Natural killer cell (primary cell): ENCODE measurements at regions of chr1 and their contacts with region 1.

Region 1: GRCh38 chr1:156096640-156097391 is 14.6 kb upstream of the MEX3A start:
- DNase-seq: peak; percentile 82 to 97
- ATAC-seq: peak; percentile 80 to 88 (median 85)
- H3K4me3 ChIP-seq: no peak overlapping the region
- H3K4me3 Mint-ChIP-seq: peak overlapping the region; percentile 40
- H3K27ac ChIP-seq: peak overlapping the region; percentile 85
- H3K27ac Mint-ChIP-seq: peak overlapping the region; percentile 92 to 99
- H3K4me1 ChIP-seq: peaks cover 25% of the 10 kb centered on the region
- H3K4me1 Mint-ChIP-seq: peaks cover 15 to 36% of the 10 kb centered on the region in 2 donors
- H3K27me3 ChIP-seq: no peaks in the 10 kb centered on the region
- H3K27me3 Mint-ChIP-seq: peaks cover 7 to 9% of the 10 kb centered on the region in 2 donors
- CTCF ChIP-seq: peak; percentile 89

Region 2: DNA sequence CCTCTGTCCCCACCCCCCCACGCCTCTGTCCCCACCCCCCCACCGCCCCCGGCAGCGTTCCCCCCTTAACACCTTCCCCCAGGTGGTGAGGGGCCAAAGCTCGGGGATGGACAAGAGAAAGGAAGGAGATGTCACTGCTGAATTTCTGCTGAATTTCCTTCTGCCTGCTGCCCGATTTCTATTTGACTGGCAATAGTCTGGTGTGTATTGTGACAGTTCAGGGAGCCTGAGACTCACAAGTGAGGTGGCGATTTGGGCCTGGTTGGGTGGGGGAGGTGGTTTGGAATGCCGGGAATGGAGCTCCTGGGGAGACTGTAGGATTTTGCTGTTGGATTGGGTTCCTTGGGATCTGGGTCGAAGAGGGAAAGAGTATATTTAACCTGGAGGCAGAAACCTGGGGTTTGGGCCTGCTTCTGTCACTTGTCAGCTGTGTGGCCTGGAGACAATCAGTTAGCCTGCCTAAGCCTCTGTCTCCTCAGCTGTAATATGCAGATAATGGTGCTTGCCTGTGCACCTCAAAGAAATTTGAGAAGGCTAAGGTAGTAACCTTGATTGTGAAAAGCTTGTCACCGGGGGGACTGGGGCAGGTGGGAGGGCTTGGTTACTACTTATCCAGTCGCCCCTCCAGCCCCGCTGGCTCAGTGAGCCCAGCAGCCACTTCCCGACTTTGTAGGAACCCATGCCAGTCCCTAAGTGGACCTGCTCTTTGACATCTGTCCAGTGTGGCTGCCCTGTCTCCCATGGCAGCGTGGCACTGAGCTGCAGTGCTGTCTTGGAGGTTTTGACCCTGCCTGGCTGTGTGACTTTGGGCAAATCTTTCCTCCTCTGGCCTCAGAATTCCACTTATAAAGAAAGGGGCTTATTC is 10.0 kb after region 1 on chr1:
- intact Hi-C with region 1: loop called (anchors 1 kb)
- DNase-seq: no peak
- ATAC-seq: peak in 1 of 3 donors; percentile 18
- H3K4me3 ChIP-seq: no peak overlapping the region
- H3K4me3 Mint-ChIP-seq: peak overlapping the region; percentile 74
- H3K27ac ChIP-seq: peak overlapping the region; percentile 94
- H3K27ac Mint-ChIP-seq: peak overlapping the region; percentile 96 to 99
- H3K4me1 ChIP-seq: peaks cover 40% of the 10 kb centered on the region
- H3K4me1 Mint-ChIP-seq: peaks cover 11 to 43% of the 10 kb centered on the region in 2 donors
- H3K27me3 ChIP-seq: peaks cover 4% of the 10 kb centered on the region
- H3K27me3 Mint-ChIP-seq: peaks cover 0 to 7% of the 10 kb centered on the region in 2 donors
- CTCF ChIP-seq: no peak

Region 3: GRCh38 chr1:156114101-156114916 is 17.5 kb after region 1 on chr1 and contains the start of gene LMNA:
- intact Hi-C with region 1: loop called (anchors 1 kb)
- DNase-seq: peak; percentile 76 to 88
- ATAC-seq: peak; percentile 81 to 86 (median 82)
- H3K4me3 ChIP-seq: peak within 1 kb of the TSS; percentile 56
- H3K4me3 Mint-ChIP-seq: peak within 1 kb of the TSS; percentile 91
- H3K27ac ChIP-seq: no peak within 1 kb of the TSS
- H3K27ac Mint-ChIP-seq: peak within 1 kb of the TSS; percentile 73 to 93
- H3K4me1 ChIP-seq: peaks cover 27% of the 10 kb centered on the region
- H3K4me1 Mint-ChIP-seq: peaks cover 20 to 32% of the 10 kb centered on the region in 2 donors
- H3K27me3 ChIP-seq: peaks cover 25% of the 10 kb centered on the region
- H3K27me3 Mint-ChIP-seq: peaks cover 0 to 32% of the 10 kb centered on the region in 2 donors
- CTCF ChIP-seq: no peak
- total RNA-seq, gene LMNA: 201 to 504 (median 273) TPM

Region 4: GRCh38 chr1:156172696-156173470 is 76.1 kb after region 1 on chr1:
- intact Hi-C with region 1: no loop called
- DNase-seq: no peak
- ATAC-seq: no peak
- H3K4me3 ChIP-seq: no peak overlapping the region
- H3K4me3 Mint-ChIP-seq: no peak overlapping the region
- H3K27ac ChIP-seq: no peak overlapping the region
- H3K27ac Mint-ChIP-seq: no peak overlapping the region
- H3K4me1 ChIP-seq: no peaks in the 10 kb centered on the region
- H3K4me1 Mint-ChIP-seq: no peaks in the 10 kb centered on the region
- H3K27me3 ChIP-seq: no peaks in the 10 kb centered on the region
- H3K27me3 Mint-ChIP-seq: peaks cover 4 to 13% of the 10 kb centered on the region in 2 donors
- CTCF ChIP-seq: no peak